ENCODE measurements at regions of chr16 and their contacts with region 1.

Region 1: DNA sequence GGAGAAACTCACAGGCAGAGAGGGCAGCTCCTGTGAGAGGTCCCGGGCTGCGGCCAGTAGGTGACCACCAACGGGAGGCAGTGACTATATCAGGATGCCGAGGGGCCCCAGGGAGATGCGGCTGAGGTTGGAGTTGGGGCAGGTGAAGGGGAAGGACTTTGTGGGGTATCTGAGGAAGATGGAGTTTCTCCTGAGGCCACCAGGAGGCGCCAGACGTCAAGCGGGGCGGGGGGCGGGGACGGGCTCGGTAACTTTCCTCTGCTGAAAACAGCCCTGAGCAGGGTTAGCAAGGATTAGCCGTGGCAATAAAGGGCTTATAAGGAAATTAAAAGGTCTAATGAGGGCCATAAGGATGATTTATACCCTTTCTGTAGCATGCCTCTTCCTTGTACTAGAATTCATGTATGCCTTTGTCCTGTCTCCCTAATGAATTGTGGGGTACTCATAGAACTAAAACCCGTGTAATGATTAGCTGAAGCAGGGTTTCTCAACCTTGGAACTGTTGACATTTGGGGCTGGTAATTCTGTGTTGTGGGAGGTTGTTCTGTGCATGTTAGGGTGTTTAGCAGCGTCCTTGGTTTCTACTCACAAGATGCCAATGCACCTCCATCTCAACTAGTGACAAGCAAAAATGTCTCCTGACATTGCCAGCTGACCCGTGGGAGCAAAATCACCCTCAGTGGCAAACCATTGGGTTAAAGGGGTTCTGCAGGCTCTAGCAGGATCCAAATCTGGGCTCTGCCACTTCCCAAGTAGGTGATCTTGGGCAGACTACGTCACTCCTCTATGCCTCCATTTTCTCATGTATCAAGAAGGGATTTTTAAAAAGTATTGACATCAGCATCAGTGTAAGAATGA is 74.8 kb upstream of the GRIN2A start:
- H3K4me3 ChIP-seq: no peak overlapping the region
- H3K27ac ChIP-seq: no peak overlapping the region
- H3K4me1 ChIP-seq: no peaks in the 10 kb centered on the region
- CTCF ChIP-seq: peak; percentile 35

Region 2: DNA sequence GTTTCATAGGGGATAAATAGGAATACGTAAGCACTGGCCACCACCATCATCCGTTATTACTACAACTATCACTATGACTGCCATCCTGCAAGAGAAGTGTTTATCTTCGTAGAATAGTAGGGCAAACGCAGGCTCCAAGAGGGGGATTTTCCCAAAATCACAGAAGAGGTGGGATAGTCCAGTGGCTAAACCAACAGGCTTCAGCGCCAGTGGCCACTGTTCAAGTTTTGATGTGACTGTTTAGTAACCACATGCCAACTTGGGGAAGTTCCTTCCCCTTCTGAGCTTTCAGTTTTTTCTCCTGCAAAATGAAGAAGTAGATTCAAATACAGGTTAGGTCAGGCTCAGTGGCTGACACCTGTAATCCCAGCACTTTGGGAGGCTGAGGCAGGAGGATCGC is 14.1 kb before region 1 on chr16:
- CTCF ChIA-PET with region 1: interaction called, 14 read pairs
- POLR2A ChIA-PET with region 1: no interaction called
- H3K4me3 ChIP-seq: no peak overlapping the region
- H3K27ac ChIP-seq: no peak overlapping the region
- H3K4me1 ChIP-seq: no peaks in the 10 kb centered on the region
- CTCF ChIP-seq: no peak

Measured in HEK293 (cell line).